Common myeloid progenitor, CD34-positive (primary cell): ENCODE measurements at regions of chr2 and their contacts with region 1.

Region 1: DNA sequence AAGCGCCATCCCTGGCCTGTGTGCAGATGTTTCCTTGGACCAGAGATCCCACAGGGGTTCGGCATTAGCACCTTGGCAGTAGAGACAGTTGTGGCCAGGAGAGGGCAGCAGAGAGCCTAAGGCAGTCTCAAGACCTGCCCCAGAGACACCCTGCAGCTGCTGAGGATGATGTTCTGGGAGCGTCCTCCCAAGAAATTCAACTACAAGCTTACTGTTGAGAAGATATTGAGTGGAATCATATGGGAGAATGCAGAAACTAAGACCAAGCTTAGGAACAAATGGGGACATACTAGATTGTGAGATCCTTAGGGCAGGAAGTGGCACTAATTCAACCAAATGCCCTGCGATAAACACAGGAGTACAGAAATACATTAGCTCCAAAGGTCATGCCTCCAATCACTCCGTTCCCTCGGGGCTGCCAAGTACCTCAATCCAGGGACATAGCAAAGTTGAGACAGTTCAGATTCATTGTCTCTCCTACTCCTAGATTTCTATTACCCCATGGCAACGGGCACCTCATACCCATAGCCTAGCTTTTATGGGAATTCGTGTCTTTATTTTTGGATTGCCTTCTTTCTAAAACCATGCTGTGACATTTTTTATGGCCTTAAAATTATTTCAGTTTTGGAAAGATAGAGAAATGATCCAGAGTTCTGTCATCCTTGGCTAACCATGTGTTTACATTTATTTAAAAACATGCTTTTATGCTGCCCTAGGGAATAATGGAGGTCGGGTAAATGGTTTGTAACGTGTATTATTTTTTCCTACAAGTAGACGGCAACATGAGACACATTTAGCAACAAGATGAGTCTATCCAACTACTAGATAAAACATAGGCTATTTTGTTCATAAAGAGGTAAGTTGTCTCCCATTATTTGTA is 2.2 kb upstream of the ERMN start:
- DNase-seq: peak; percentile 80 to 90 (median 84)
- H3K4me3 ChIP-seq: no peak overlapping the region
- H3K27ac ChIP-seq: no peak overlapping the region
- H3K4me1 ChIP-seq: peaks cover 0 to 2% (median 0%) of the 10 kb centered on the region in 4 experiments
- H3K27me3 ChIP-seq: no peaks in the 10 kb centered on the region

Region 2: GRCh38 chr2:157124731-157125130 is 203.1 kb before region 1 on chr2:
- CTCF ChIA-PET with region 1: no interaction called
- POLR2A ChIA-PET with region 1: no interaction called
- DNase-seq: no peak
- H3K4me3 ChIP-seq: no peak overlapping the region
- H3K27ac ChIP-seq: no peak overlapping the region
- H3K4me1 ChIP-seq: no peaks in the 10 kb centered on the region
- H3K27me3 ChIP-seq: no peaks in the 10 kb centered on the region

Region 3: DNA sequence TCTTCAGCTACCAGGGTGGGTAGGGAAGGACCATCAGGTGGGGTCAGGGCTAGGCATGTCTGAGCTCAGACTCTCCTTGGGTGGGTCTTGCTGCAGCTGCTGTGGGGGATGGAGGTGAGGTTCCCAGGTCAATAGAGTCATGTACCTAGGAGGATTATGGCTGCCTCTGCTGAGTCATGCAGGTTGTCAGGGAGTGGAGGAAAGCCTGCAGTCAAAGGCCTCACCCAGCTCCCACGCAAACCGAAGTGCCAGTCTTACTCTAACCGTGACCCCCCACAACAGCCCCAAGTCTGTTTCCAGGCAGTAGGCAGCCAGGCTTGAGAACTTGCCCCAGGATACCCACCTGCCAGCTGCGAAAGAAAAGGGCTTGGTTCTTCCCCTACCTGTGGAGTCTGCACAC is 184.0 kb before region 1 on chr2:
- CTCF ChIA-PET with region 1: no interaction called
- POLR2A ChIA-PET with region 1: no interaction called
- DNase-seq: no peak
- H3K4me3 ChIP-seq: no peak overlapping the region
- H3K27ac ChIP-seq: no peak overlapping the region
- H3K4me1 ChIP-seq: no peaks in the 10 kb centered on the region
- H3K27me3 ChIP-seq: peaks cover 0 to 2% (median 0%) of the 10 kb centered on the region in 5 experiments

Region 4: DNA sequence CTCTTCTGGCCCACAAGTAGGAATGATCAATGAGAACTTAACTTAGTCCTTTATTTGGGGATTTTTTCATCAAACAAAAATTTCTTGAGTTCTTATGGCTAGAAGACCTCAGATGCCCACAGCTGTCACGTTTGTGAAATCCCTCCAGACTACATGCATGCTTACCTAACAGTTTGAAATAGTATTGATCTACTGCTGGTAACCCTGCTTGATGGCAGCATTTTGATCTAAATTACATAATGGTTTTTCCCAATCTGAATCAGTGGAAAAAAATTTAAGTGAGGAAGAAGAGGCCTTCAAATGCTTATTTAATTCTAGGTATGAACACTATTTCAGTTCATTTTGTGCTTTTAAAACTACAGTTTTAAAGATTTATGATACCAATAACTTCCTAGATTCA is 16.2 kb before region 1 on chr2:
- CTCF ChIA-PET with region 1: interaction called, 91 read pairs
- POLR2A ChIA-PET with region 1: no interaction called
- DNase-seq: no peak
- H3K4me3 ChIP-seq: no peak overlapping the region
- H3K27ac ChIP-seq: no peak overlapping the region
- H3K4me1 ChIP-seq: peaks cover 0 to 8% (median under 1%) of the 10 kb centered on the region in 4 experiments
- H3K27me3 ChIP-seq: no peaks in the 10 kb centered on the region

Region 5: DNA sequence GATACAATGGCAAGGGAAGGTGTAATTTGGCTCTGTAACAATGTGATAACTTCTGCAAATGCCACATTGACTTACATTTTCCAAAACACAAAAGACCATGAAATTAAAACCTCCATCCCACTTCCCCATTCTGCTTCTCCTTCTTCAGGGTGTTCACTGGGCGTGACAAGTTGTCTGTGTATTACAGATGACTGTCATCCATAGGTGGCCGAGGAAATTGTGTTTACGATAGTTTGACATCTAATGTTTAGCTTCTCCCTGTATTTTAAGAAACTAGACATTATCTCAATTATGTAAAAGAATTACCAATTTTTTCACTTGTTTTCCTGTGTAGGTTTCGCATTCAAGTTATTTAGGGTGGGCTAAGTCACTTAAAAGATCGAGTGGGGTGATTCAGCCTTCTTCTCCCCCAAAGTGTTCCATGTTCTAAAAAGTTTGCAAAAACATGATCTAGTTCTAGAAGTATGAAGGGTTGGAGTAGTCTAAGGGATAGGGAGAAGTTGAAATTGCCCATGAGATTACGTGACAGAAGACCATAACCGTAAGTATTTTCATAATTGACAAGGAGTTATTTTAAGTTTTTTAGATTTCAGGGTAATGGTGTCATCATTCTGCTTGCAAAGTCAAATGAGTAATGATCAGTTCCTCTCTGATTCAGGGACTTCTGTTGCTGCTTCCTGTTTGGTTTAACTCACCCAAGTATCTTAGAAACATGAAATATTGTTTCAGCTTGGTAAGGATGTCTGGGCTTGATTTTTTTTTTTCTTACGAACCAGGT is 141.3 kb after region 1 on chr2:
- CTCF ChIA-PET with region 1: interaction called, 11 read pairs
- POLR2A ChIA-PET with region 1: no interaction called
- DNase-seq: peak; percentile 81 to 96 (median 94)
- H3K4me3 ChIP-seq: peak overlapping the region in 6 of 7 experiments; percentile 27 to 67 (median 46)
- H3K27ac ChIP-seq: peak overlapping the region; percentile 96 to 97
- H3K4me1 ChIP-seq: peaks cover 30 to 45% (median 38%) of the 10 kb centered on the region in 4 experiments
- H3K27me3 ChIP-seq: no peaks in the 10 kb centered on the region

Region 6: DNA sequence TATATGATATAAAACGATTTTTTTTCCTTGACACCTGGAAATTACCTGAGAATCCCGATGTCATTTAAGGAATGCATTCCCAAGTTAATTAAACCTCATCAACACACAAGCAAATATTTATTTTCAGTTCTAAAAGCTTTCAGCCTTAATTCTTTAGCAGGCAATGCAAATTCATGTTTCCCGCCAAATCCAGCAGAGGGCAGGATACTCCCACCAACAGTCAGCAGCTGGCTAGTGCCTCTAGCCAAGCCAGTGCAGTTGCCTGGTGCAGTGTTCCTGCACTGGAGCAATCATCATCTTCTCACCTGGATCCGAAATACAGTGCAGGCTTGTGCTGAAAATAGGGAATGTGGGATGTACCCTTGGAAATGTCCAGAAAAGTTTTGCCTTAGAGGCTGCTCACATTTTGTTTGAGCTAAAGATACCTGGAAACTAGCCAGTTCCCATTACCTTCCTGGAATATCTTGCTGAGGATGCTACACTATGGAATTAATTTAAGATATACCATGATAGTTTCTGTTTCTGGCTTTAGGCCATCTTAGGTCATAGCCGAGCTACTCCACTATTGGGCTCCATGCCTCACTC is 164.4 kb after region 1 on chr2:
- CTCF ChIA-PET with region 1: interaction called, 13 read pairs
- POLR2A ChIA-PET with region 1: interaction called, 3 read pairs
- DNase-seq: peak; percentile 71 to 86 (median 80)
- H3K4me3 ChIP-seq: no peak overlapping the region
- H3K27ac ChIP-seq: no peak overlapping the region
- H3K4me1 ChIP-seq: peaks cover 0 to 14% (median 7%) of the 10 kb centered on the region in 4 experiments
- H3K27me3 ChIP-seq: no peaks in the 10 kb centered on the region

Region 7: DNA sequence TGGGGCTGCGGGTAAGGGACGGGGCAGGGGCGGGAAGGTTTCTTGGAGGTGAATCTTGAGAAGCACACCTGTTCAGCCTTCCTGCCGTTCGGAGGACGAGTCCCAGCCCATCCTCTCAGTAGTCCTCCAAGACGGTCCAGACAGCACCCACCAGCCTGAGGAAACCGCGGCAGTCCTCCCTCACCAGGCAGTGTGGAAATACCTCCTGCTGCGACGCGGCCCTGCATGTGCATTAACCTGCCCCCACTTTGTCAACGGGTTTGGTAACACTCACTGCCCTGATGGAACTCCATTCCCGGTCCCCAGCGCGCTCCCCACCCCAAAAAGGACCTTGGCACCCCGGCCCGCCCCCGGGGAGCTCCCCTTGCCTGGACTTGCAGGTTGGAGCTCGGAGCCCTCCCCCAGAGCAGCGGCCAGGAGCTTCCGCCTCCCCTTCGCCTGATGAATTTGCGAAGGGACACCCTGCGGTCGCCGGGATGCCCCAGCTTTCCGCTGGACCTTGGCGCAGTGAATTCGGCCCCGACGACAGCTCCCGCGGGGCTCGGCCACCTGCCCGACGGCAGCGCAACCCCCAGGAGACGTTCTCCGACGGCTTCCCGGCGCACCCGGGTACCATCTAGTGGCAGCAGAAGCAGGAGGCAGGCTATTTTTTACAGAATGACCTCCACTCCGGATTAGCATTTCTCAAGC is 269.3 kb after region 1 on chr2:
- CTCF ChIA-PET with region 1: interaction called, 20 read pairs
- POLR2A ChIA-PET with region 1: no interaction called
- DNase-seq: peak; percentile 46 to 69 (median 65)
- H3K4me3 ChIP-seq: peak overlapping the region in 5 of 7 experiments; percentile 9 to 58 (median 34)
- H3K27ac ChIP-seq: no peak overlapping the region
- H3K4me1 ChIP-seq: peaks cover 0 to 3% (median 1%) of the 10 kb centered on the region in 4 experiments
- H3K27me3 ChIP-seq: peaks cover 0 to 2% (median 0%) of the 10 kb centered on the region in 5 experiments

Region 8: GRCh38 chr2:157732548-157732963 is 404.7 kb after region 1 on chr2:
- CTCF ChIA-PET with region 1: no interaction called
- POLR2A ChIA-PET with region 1: no interaction called
- DNase-seq: no peak
- H3K4me3 ChIP-seq: no peak overlapping the region
- H3K27ac ChIP-seq: no peak overlapping the region
- H3K4me1 ChIP-seq: no peaks in the 10 kb centered on the region
- H3K27me3 ChIP-seq: no peaks in the 10 kb centered on the region